Natural killer cell (primary cell): ENCODE measurements at regions of chr6 and their contacts with region 1.

Region 1: DNA sequence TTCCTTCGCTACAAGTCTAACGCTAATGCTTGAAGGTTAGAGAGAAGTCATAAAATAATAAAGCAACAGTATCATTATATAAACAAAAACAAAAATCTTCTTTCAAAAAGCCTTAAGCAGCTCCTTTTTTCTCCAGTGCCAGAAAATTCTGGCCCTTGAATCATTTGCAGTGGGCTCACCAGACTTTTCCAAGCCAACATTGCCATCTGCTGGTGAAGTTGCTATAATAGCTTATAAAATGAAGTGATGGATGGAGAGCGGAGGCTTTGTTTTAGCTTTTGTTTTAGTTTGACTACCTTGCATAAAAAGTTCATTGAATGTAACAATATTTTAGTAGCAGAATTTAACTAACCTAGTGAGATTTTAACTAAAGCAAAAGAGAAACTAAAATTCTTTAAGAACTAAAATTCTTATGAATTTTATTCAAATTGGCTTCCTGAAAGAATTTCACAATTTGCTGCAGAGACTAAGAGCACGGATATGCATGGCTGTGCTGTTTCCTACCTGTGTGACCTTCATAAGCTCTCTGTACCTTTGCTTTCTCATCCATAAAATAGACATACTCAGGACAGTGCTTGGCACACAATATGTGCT is 44.8 kb upstream of the SLC2A12 start:
- DNase-seq: peak; percentile 40 to 84
- ATAC-seq: peak in 2 of 3 donors; percentile 59 to 63
- H3K4me3 ChIP-seq: no peak overlapping the region
- H3K4me3 Mint-ChIP-seq: no peak overlapping the region
- H3K27ac ChIP-seq: no peak overlapping the region
- H3K27ac Mint-ChIP-seq: no peak overlapping the region
- H3K4me1 ChIP-seq: no peaks in the 10 kb centered on the region
- H3K4me1 Mint-ChIP-seq: no peaks in the 10 kb centered on the region
- H3K27me3 ChIP-seq: peaks cover 2% of the 10 kb centered on the region
- H3K27me3 Mint-ChIP-seq: peaks cover 17 to 36% of the 10 kb centered on the region in 2 donors
- CTCF ChIP-seq: peak; percentile 70

Region 2: DNA sequence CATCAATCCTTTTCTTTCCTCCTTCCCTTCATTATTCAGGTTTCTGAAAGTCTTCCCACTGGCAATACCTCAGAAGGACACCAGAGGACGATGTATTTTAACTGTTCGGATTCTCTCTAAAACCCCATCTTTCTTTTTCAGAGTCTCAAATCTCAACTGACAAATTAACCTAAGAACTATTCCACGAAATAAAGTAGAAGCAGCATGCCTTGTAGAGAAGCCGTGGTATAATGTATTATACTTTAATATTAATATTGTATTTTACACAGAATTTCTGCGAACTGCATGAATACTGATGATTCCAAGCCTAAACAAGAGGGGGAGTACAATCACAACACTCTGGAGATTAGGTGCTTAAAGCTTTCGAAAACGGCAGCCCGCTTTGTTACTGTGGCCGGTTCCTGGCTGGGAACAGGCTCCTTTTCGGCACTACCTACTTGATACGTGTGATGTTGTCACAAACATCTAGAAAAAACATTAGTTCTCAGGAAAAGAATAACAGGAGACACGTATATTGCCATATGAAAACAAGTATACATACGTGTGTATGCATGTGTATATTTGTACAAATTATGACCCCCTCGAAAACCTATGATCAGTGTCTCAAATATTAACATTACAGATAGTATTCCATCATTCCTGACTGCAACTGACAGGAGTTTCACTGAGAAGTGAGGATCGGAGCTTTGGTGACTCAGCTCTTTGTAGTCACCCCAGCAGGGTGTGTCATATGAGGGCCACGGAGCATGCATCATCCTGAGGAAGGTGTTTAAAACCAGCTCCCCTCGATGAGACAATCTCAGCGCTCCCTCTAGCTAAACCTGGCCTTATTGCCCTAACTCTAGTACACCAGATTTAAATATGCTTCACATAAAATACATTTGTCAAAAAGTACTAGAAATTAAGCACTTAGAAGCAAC is 528.0 kb before region 1 on chr6:
- intact Hi-C with region 1: loop called (anchors 1 kb)
- DNase-seq: peak in 1 of 2 donors; percentile 14
- ATAC-seq: peak in 2 of 3 donors; percentile 64 to 68
- H3K4me3 ChIP-seq: no peak overlapping the region
- H3K4me3 Mint-ChIP-seq: no peak overlapping the region
- H3K27ac ChIP-seq: no peak overlapping the region
- H3K27ac Mint-ChIP-seq: no peak overlapping the region
- H3K4me1 ChIP-seq: no peaks in the 10 kb centered on the region
- H3K4me1 Mint-ChIP-seq: peaks cover 0 to 12% of the 10 kb centered on the region in 2 donors
- H3K27me3 ChIP-seq: no peaks in the 10 kb centered on the region
- H3K27me3 Mint-ChIP-seq: peaks cover 8 to 22% of the 10 kb centered on the region in 2 donors
- CTCF ChIP-seq: peak; percentile 83

Region 3: GRCh38 chr6:133871131-133871530 is 226.1 kb before region 1 on chr6:
- intact Hi-C with region 1: no loop called
- DNase-seq: no peak
- ATAC-seq: no peak
- H3K4me3 ChIP-seq: no peak overlapping the region
- H3K4me3 Mint-ChIP-seq: no peak overlapping the region
- H3K27ac ChIP-seq: no peak overlapping the region
- H3K27ac Mint-ChIP-seq: no peak overlapping the region
- H3K4me1 ChIP-seq: no peaks in the 10 kb centered on the region
- H3K4me1 Mint-ChIP-seq: no peaks in the 10 kb centered on the region
- H3K27me3 ChIP-seq: peaks cover 4% of the 10 kb centered on the region
- H3K27me3 Mint-ChIP-seq: peaks cover 13 to 32% of the 10 kb centered on the region in 2 donors
- CTCF ChIP-seq: no peak

Region 4: DNA sequence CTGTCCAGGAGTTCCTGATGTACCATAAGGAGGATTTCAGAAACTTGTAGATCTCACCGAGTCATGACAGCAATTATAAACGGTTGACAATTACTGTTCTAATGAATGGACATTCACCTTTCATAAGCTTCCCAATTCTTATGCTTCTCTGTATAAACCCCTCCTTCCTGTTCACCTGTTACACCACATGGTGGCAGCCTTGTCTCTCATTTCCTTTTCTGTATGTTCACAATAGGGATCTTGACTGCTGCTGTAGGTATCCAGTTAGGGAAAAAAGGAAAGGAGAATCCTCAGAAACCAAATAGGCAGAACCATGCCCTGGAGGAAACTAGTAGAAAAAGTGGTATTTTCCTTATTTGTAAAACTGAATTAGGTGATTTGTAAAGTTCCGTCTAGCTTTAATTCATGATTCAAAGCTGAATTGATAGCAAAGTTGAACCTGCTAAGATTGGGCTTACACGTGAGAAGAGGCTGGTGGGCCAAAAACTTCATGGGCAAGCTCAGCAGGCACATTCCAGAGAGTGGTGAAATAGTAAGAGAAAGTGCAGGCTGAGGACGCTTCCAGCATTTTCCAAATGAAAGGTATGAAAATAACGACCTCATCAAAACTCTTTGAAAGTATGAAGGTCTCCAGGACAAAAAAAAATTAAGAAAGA is 173.1 kb before region 1 on chr6:
- intact Hi-C with region 1: loop called (anchors 1 kb)
- DNase-seq: peak in 1 of 2 donors; percentile 84
- ATAC-seq: peak; percentile 75 to 93 (median 88)
- H3K4me3 ChIP-seq: no peak overlapping the region
- H3K4me3 Mint-ChIP-seq: no peak overlapping the region
- H3K27ac ChIP-seq: no peak overlapping the region
- H3K27ac Mint-ChIP-seq: no peak overlapping the region
- H3K4me1 ChIP-seq: no peaks in the 10 kb centered on the region
- H3K4me1 Mint-ChIP-seq: no peaks in the 10 kb centered on the region
- H3K27me3 ChIP-seq: peaks cover 14% of the 10 kb centered on the region
- H3K27me3 Mint-ChIP-seq: peaks cover 22 to 49% of the 10 kb centered on the region in 2 donors
- CTCF ChIP-seq: peak; percentile 87

Region 5: GRCh38 chr6:134145786-134146185 is 48.6 kb after region 1 on chr6:
- intact Hi-C with region 1: no loop called
- DNase-seq: no peak
- ATAC-seq: no peak
- H3K4me3 ChIP-seq: no peak overlapping the region
- H3K4me3 Mint-ChIP-seq: no peak overlapping the region
- H3K27ac ChIP-seq: no peak overlapping the region
- H3K27ac Mint-ChIP-seq: no peak overlapping the region
- H3K4me1 ChIP-seq: no peaks in the 10 kb centered on the region
- H3K4me1 Mint-ChIP-seq: no peaks in the 10 kb centered on the region
- H3K27me3 ChIP-seq: no peaks in the 10 kb centered on the region
- H3K27me3 Mint-ChIP-seq: peaks cover 6 to 9% of the 10 kb centered on the region in 2 donors
- CTCF ChIP-seq: no peak